ENCODE measurements at regions of chr7 and their contacts with region 1.

Region 1: DNA sequence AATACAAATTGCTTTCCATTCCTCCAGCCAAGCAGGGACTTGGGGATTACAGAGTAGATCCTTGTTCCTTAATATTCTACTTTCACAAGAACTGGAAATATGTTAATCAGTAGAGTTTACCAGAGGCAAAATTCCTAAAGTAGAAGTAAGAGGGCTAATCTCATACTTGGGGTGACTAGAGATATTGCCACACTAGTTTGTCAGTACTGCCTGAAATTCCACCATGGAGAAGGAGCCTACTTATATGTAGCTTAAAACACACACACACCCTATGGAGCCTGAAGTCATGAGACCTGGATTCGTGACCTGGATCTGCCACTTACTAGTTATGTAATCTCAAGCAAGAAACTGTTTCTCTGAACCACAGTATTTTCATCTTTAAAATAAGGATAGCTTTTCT is 33.9 kb downstream of the STRIP2 start:
- DNase-seq: no peak
- ATAC-seq: no peak

Region 2: GRCh38 chr7:129218514-129219062 is 249.5 kb before region 1 on chr7:
- intact Hi-C with region 1: loop called (anchors 10 kb)
- DNase-seq: peak; percentile 94
- ATAC-seq: peak; percentile 91

Region 3: DNA sequence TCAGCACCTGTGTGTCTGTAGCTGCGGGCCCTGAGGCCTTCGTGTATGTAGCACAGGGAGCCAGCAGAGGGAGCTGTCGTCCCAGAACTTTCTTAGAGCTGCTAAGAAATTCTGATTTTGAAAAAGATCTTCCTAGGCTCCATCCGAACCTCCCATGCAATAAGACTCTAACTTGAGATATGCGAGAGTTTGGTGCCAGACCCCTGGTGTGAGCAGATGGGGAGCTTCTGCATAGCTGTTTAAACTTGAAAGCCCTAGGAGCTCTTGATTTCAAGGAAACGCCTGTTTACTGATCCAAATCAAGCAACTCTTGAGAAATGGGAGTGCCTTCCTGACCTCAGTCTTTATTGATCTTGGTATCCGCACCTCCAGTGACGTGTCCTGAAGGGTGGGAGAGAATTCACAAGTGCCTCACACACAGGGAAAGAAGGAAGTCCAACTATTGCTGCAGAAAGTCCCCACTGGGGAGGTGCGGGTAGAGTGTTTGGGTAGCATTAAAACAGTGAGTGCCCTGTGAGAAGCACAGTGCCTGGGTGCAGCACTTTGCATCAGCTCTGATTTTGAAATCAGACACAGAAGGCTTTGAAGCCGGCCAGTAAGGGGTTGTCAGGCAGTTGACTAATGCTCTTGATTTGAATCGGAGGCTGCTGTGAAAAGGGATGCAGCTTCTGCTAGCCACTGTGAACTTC is 100.2 kb before region 1 on chr7:
- intact Hi-C with region 1: loop called (anchors 10 kb)
- DNase-seq: peak; percentile 91
- ATAC-seq: peak; percentile 90

Measured in sciatic nerve (tissue), 2 donors.